ENCODE measurements at regions of chr13 and their contacts with region 1.

Region 1: DNA sequence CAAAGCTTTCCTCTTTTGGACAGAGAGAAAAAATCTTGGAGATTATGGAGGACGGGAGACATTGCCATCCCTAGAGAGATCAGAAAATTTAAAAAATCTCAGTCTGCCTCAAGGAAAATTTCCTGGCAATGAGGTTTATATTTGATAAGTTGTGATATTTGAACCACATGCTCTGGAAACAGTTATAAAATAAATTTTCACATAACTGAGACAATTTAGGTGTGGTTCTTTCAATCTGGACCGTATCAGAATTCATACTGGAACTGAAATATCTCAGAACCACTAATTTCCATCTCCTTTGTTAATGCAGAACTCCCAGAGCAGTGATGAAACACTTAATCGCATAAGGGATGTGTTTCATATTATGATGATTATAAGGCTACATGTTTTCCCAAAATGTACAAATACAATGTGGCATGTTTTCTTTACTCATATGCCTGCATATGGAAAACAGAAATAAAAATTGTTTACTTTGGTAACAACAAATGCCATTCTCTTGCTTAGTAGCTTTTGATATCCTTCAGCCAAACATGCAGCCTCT is 13.7 kb downstream of the UBE2L5 start:
- DNase-seq: no peak
- H3K4me3 ChIP-seq: no peak overlapping the region
- H3K27ac ChIP-seq: no peak overlapping the region
- H3K4me1 ChIP-seq: peaks cover 66% of the 10 kb centered on the region
- CTCF ChIP-seq: no peak

Region 2: GRCh38 chr13:29397265-29397664 is 1038.7 kb before region 1 on chr13:
- CTCF ChIA-PET with region 1: no interaction called
- POLR2A ChIA-PET with region 1: no interaction called
- intact Hi-C with region 1: no loop called
- DNase-seq: no peak
- H3K4me3 ChIP-seq: no peak overlapping the region
- H3K27ac ChIP-seq: no peak overlapping the region
- H3K4me1 ChIP-seq: no peaks in the 10 kb centered on the region
- CTCF ChIP-seq: no peak

Region 3: DNA sequence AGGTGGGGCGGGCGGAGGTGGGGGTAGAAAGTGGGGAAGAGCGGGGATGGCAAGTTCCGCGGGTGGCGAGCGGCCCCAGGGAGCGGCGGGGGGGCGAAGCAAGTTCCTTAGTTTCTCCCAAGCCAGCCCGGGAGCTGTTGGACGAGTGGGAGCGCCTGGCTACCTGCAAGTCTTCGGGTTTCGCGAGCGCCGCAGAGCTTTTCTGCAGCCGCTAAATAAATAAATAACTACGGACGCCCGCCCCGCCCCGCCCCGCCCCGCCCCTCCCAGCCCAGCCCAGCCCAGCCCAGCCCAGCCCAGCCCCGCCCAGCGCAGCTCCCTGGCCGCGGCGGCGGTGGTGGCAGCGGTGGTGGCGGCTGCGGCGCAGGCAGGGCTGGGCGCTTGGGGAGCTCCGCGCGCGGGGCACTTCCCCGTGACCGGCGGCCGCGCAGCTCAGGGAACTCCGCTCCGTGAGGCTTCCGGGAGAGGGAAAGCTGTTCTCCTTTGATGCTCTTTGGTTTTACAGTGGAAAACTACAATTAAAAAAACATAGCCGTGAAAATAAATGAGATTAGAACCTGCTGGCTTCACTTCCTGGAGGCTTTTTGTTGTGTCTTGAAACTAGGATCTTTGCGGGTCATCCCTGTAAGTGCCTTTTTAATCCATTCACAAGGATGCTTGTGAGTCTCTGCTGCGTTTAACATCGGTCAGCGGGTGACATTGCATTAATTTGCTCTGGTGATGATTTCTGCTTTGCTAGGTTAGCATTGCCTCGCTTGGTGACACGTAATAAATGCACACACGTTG is 13.7 kb before region 1 on chr13 and contains the start of gene UBE2L5:
- CTCF ChIA-PET with region 1: interaction called, 4 read pairs
- POLR2A ChIA-PET with region 1: interaction called, 235 read pairs
- intact Hi-C with region 1: no loop called
- DNase-seq: peak; percentile 88
- H3K4me3 ChIP-seq: peak within 1 kb of the TSS; percentile 72
- H3K27ac ChIP-seq: peak within 1 kb of the TSS; percentile 76
- H3K4me1 ChIP-seq: peaks cover 77% of the 10 kb centered on the region
- CTCF ChIP-seq: no peak
- total RNA-seq, gene UBE2L5: 0.15 and 0.22 TPM in 2 replicates

Measured in OCI-LY7 (cell line).